CD4-positive, alpha-beta T cell (primary cell): ENCODE measurements at regions of chr12 and their contacts with region 1.

Region 1: DNA sequence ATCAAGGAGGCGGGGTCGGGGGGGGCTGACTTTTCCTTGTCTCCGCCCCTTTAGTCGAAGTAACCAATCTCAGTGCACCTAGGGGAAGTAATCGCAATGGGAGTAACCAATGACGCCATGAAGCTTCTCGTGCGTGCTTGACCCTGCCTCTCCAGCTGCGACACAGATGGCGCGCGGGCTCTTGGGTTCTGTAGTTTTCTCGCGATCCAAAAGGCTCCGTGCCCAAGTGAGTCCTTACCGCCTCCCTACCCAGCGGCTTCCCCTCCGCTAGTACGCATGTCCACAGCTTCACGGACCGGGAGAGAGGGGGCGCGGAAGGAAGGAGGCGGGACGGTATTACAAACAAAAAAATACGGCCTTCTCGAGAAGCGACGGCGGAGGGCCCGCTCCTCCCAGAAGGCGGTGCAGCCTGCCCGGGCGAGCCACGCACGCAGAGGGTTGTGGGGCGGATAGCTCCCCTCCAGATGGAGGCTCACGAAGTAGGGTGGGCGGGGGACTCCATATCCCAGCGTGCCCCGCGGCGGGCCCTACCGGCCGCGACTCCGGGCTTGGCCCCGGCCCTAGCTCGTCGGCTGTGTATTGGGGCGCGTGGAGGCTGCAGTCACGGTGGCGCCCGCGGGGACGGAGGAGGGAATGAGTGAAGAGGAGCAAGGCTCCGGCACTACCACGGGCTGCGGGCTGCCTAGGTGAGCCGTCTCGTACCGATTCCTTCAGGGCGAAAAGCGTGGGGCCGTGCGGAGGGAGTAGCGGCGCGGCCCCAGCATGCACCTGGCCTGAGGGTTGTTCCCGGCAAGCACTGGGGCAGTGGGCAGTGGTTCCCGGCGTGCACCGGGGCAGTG is at the start of gene TARBP2:
- DNase-seq: peak; percentile 90 to 100 (median 98)
- ATAC-seq: peak; percentile 77
- H3K4me3 ChIP-seq: peak within 1 kb of the TSS; percentile 66
- H3K4me3 Mint-ChIP-seq: peak within 1 kb of the TSS; percentile 96
- H3K27ac ChIP-seq: peak within 1 kb of the TSS; percentile 96 to 97
- H3K27ac Mint-ChIP-seq: peak within 1 kb of the TSS; percentile 98
- H3K4me1 ChIP-seq: peaks cover 43% of the 10 kb centered on the region
- H3K4me1 Mint-ChIP-seq: peaks cover 44% of the 10 kb centered on the region
- H3K27me3 ChIP-seq: no peaks in the 10 kb centered on the region
- H3K27me3 Mint-ChIP-seq: no peaks in the 10 kb centered on the region
- CTCF ChIP-seq: no peak
- total RNA-seq, gene TARBP2: 21.7 to 22.4 TPM

Region 2: DNA sequence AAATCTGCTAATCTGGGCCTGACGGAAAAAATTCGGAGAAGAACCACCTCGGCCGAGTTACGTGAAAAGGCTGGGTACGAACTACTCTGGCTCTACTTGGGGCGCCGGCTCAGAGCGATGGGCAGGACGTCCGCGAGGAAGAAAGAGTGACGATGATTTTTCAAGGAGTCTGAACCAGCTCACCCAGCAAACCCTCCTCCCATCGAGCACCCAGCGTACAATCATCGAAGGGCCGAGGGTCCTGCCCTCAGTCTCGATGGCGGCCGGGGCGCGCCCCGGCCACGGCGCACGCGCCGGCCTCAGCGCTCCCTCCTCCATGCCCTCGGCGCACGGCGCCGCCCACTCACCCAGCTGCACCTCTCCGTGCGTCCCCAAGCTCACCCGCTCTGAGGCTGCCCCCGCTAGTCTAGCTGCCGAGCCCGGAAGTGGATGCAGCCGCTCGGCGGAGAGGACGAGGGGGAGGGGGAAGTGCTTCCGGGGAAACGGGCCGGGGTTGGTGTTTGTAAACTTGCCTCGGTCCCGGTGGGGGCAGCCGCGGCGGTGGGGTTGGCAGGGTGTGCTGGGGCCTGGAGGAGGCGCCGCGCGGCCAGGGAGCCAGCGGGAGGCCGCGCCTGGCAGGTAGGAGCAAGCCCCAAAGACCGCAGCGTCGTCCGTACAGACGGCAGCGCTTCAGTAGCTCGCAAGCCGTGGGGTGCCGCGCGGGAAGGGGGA is 320.6 kb before region 1 on chr12 and contains the starts of genes CSAD and ZNF740:
- CTCF ChIA-PET with region 1: no interaction called
- POLR2A ChIA-PET with region 1: interaction called, 13 read pairs
- intact Hi-C with region 1: no loop called
- DNase-seq: peak; percentile 92 to 99 (median 97)
- ATAC-seq: peak; percentile 93
- H3K4me3 ChIP-seq: peak within 1 kb of the TSS; percentile 94
- H3K4me3 Mint-ChIP-seq: peak within 1 kb of the TSS; percentile 98
- H3K27ac ChIP-seq: peak within 1 kb of the TSS; percentile 87 to 92
- H3K27ac Mint-ChIP-seq: peak within 1 kb of the TSS; percentile 94
- H3K4me1 ChIP-seq: peaks cover 52% of the 10 kb centered on the region
- H3K4me1 Mint-ChIP-seq: peaks cover 57% of the 10 kb centered on the region
- H3K27me3 ChIP-seq: no peaks in the 10 kb centered on the region
- H3K27me3 Mint-ChIP-seq: no peaks in the 10 kb centered on the region
- CTCF ChIP-seq: no peak
- total RNA-seq, gene CSAD: 56.7 to 57.3 TPM
- total RNA-seq, gene ZNF740: 24.4 to 24.7 TPM

Region 3: DNA sequence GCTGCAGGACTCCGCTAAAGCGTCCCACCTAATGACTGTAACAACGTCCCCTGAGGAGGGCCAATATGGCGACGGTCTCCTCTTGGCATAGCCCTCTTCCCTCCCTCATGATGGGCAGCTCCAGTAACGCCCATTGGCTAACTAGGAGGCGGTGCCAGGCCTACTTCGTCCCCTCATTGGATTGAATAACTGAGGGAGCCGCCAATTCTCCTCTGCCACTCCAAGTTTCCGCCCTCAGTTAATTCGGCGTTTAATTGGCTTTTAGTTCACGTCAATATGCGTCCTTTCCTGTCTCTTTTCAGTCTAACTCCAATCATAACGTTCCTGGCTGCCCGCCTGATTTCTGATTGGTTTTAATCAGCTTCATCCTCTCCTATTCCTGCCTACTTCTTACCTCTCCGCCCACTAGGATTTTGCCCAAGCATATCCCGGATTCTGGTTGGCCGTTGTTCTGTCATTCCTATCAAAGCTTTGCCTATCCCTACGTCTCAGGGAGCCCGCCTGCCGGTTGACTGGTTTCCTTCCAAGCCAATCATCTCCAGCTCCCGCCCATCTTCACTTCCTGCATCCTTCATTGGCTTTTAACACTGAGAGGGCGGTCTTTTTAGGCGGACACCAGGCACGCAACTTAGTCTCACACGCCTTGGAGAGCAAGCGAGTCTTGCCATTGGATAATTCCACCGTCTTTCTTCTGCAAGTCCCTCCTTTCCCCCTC is 121.4 kb before region 1 on chr12:
- CTCF ChIA-PET with region 1: no interaction called
- POLR2A ChIA-PET with region 1: interaction called, 65 read pairs
- intact Hi-C with region 1: loop called (anchors 1 to 2 kb)
- DNase-seq: peak in 12 of 14 experiments; percentile 80 to 100 (median 92)
- ATAC-seq: peak; percentile 76
- H3K4me3 ChIP-seq: peak overlapping the region; percentile 63
- H3K4me3 Mint-ChIP-seq: no peak overlapping the region
- H3K27ac ChIP-seq: peak overlapping the region; percentile 67 to 75
- H3K27ac Mint-ChIP-seq: no peak overlapping the region
- H3K4me1 ChIP-seq: peaks cover 52% of the 10 kb centered on the region
- H3K4me1 Mint-ChIP-seq: peaks cover 31% of the 10 kb centered on the region
- H3K27me3 ChIP-seq: no peaks in the 10 kb centered on the region
- H3K27me3 Mint-ChIP-seq: no peaks in the 10 kb centered on the region
- CTCF ChIP-seq: no peak

Region 4: GRCh38 chr12:53459097-53459496 is 41.9 kb before region 1 on chr12:
- CTCF ChIA-PET with region 1: no interaction called
- POLR2A ChIA-PET with region 1: interaction called, 14 read pairs
- intact Hi-C with region 1: no loop called
- DNase-seq: no peak
- ATAC-seq: no peak
- H3K4me3 ChIP-seq: no peak overlapping the region
- H3K4me3 Mint-ChIP-seq: peak overlapping the region; percentile 20
- H3K27ac ChIP-seq: no peak overlapping the region
- H3K27ac Mint-ChIP-seq: no peak overlapping the region
- H3K4me1 ChIP-seq: peaks cover 18% of the 10 kb centered on the region
- H3K4me1 Mint-ChIP-seq: peaks cover 56% of the 10 kb centered on the region
- H3K27me3 ChIP-seq: no peaks in the 10 kb centered on the region
- H3K27me3 Mint-ChIP-seq: no peaks in the 10 kb centered on the region
- CTCF ChIP-seq: no peak

Region 5: GRCh38 chr12:53675651-53676453 is 174.9 kb after region 1 on chr12 and contains the start of gene ATP5MC2:
- CTCF ChIA-PET with region 1: no interaction called
- POLR2A ChIA-PET with region 1: interaction called, 20 read pairs
- intact Hi-C with region 1: loop called in 1 of 2 experiments (anchors 2 kb)
- DNase-seq: peak; percentile 95 to 100 (median 96)
- ATAC-seq: peak; percentile 92
- H3K4me3 ChIP-seq: peak within 1 kb of the TSS; percentile 78
- H3K4me3 Mint-ChIP-seq: peak within 1 kb of the TSS; percentile 93
- H3K27ac ChIP-seq: peak within 1 kb of the TSS; percentile 58 to 66
- H3K27ac Mint-ChIP-seq: peak within 1 kb of the TSS; percentile 90
- H3K4me1 ChIP-seq: peaks cover 31% of the 10 kb centered on the region
- H3K4me1 Mint-ChIP-seq: peaks cover 32% of the 10 kb centered on the region
- H3K27me3 ChIP-seq: peaks cover 10 to 18% of the 10 kb centered on the region in 2 experiments
- H3K27me3 Mint-ChIP-seq: peaks cover 17% of the 10 kb centered on the region
- CTCF ChIP-seq: peak; percentile 99
- total RNA-seq, gene ATP5MC2: 235 to 245 TPM

Region 6: DNA sequence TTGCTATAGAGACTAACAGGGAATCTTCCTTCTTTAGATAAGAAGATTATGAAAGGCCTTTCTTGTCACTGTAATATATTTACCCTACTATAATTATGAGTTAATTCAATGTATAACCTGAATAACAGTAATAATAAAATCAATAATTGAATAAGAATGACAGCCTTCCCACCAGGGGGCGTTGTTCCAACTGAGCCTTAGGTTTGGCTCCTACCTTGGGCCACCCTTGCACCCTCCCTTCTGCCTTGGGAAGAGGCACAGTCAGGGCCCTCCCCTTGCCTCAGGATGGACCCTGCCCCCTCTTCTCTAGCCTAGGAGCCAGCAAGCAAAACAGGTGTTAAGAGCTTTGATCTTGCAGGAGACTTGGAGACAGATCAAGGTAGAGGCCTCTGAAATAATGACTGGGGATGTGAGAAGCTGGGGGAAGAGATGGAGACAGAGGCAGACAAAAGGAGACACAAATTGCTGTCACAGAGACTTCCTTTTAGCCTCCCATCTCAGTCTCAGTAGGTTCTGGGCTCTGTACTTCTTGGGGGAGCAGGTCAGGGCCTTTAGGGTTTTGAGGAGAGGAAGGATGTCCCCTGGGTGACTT is 290.8 kb after region 1 on chr12:
- CTCF ChIA-PET with region 1: no interaction called
- POLR2A ChIA-PET with region 1: no interaction called
- intact Hi-C with region 1: no loop called
- DNase-seq: peak in 13 of 14 experiments; percentile 3 to 62 (median 20)
- ATAC-seq: no peak
- H3K4me3 ChIP-seq: no peak overlapping the region
- H3K4me3 Mint-ChIP-seq: no peak overlapping the region
- H3K27ac ChIP-seq: no peak overlapping the region
- H3K27ac Mint-ChIP-seq: no peak overlapping the region
- H3K4me1 ChIP-seq: peaks cover 3% of the 10 kb centered on the region
- H3K4me1 Mint-ChIP-seq: no peaks in the 10 kb centered on the region
- H3K27me3 ChIP-seq: peaks cover 20 to 32% of the 10 kb centered on the region in 2 experiments
- H3K27me3 Mint-ChIP-seq: peaks cover 38% of the 10 kb centered on the region
- CTCF ChIP-seq: peak; percentile 69